Activated B cell treated with CpG ODN at 0.5 μM for 24 hours (primary cell): ENCODE measurements at regions of chr6 and their contacts with region 1.

Region 1: GRCh38 chr6:156729248-156729647 is 47.9 kb upstream of the ARID1B start:
- DNase-seq: no peak
- ATAC-seq: peak; percentile 84
- H3K4me3 Mint-ChIP-seq: no peak overlapping the region
- H3K27ac Mint-ChIP-seq: no peak overlapping the region
- H3K4me1 Mint-ChIP-seq: peaks cover 32% of the 10 kb centered on the region
- H3K27me3 Mint-ChIP-seq: no peaks in the 10 kb centered on the region
- CTCF ChIP-seq: no peak

Region 2: DNA sequence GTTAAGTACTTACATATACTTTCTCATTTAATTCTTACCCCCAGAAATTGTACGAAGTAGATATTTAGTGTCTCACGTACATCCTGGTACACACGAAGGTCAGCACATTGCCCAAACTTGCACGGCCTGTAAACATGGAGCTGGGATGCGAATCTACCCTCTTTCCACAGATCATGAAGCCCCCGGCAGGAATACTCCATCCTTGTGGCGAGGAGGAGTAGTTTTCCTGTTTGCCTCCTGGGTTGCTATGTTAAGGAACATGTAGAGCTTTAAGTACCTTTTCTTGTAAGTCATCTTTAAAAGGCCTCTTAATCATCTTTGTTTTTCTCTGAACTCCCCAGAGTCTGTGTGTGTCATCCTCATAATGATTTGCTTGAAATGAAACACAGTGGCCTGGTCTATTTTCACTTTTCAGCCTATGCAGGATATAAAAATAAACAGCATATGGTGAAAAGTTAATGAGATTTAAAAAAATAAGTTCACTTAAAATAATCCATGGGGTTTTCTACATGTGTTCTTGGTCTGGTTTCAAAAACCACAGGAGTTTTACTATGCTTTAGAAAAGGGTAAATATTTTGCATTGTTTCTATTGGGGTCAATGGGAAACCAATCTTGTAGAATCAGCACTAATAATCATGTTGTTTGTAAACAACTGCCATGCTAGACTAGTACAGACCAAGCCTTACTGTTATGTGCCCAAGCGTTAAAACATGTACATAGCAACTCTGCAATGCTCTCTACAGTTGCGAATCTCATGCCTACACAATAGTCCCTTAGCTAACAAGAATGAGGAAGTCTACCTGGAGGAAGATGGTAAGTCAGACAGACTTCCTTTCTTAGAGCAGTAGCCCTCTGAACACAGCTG is 38.6 kb after region 1 on chr6:
- CTCF ChIA-PET with region 1: no interaction called
- POLR2A ChIA-PET with region 1: no interaction called
- intact Hi-C with region 1: loop called (anchors 2 kb)
- DNase-seq: no peak
- ATAC-seq: peak; percentile 91
- H3K4me3 Mint-ChIP-seq: peak overlapping the region; percentile 30
- H3K27ac Mint-ChIP-seq: peak overlapping the region; percentile 84
- H3K4me1 Mint-ChIP-seq: peaks cover 28% of the 10 kb centered on the region
- H3K27me3 Mint-ChIP-seq: no peaks in the 10 kb centered on the region
- CTCF ChIP-seq: no peak

Region 3: GRCh38 chr6:156816505-156816904 is 87.3 kb after region 1 on chr6:
- CTCF ChIA-PET with region 1: no interaction called
- POLR2A ChIA-PET with region 1: no interaction called
- intact Hi-C with region 1: no loop called
- DNase-seq: no peak
- ATAC-seq: peak; percentile 47
- H3K4me3 Mint-ChIP-seq: no peak overlapping the region
- H3K27ac Mint-ChIP-seq: no peak overlapping the region
- H3K4me1 Mint-ChIP-seq: peaks cover 89% of the 10 kb centered on the region
- H3K27me3 Mint-ChIP-seq: no peaks in the 10 kb centered on the region
- CTCF ChIP-seq: no peak